GM12878 (cell line): ENCODE measurements at regions of chr18 and their contacts with region 1.

Region 1: DNA sequence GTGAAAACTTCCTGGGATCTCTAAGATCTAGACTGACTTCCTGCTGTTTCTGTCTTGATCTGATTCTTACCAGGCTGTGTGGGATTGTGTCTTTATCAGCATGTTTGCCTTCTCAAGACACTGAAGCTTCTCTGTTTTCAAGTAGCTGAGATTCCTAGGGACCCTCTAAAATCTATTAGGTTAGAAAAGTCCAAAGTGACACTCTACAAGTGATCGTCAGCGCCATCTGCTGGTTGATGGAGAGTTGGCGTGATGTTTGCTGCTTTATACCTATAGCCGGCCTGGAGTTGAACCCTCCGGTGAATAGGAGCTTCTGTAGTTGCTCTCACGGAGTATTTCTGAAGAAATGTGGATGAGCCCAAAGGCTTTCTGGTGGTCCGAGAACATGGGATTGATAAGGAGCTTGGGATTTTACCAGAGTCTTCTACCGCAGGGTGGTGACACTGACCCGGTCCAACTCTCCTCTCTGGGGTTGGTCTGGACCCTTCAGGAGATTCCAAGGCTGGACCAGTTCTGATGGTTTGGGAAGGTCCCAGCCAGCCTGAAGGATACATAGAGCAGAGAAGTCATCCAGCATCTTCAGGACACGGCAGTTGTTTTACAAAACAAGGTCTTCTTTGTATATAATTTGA is 96.0 kb upstream of the TTC39C start:
- DNase-seq: no peak
- ATAC-seq: peak; percentile 95
- H3K4me3 ChIP-seq: no peak overlapping the region
- H3K27ac ChIP-seq: no peak overlapping the region
- H3K4me1 ChIP-seq: no peaks in the 10 kb centered on the region
- H3K27me3 ChIP-seq: no peaks in the 10 kb centered on the region; a peak in 1 of 4 replicates
- CTCF ChIP-seq: peak; percentile 77 to 87 (median 85)
- EP300 ChIP-seq: no peak
- POLR2A ChIP-seq: no peak
- RAD21 ChIP-seq: peak; percentile 87

Region 2: DNA sequence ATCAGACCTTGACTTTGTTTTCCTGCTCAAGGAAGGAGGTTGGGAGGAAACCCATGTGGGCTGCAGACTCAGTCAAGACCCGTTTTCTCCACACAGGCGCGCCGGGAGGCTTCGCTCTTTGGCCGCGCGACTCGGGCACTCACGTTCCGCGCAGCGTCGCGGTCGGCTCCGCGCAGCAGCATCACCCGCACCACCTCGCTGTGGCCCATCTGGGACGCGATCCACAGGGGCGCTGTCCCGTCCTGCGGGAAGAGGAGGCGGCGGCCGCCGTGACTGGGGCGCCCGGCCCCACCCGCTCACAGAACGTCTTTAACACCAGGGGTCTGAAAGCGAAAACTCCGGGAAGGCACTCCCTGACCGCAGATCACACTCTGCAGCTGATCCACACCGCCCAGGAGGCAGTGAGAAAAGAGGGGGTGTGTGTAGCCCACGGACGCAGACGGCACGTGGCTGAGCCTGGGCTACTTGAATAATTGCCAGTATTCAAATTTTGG is 299.1 kb before region 1 on chr18:
- CTCF ChIA-PET with region 1: interaction called, 3 read pairs
- POLR2A ChIA-PET with region 1: no interaction called
- RAD21 ChIA-PET with region 1: interaction called, 5 read pairs
- SMC1A ChIA-PET with region 1: interaction called, 5 read pairs
- in situ Hi-C with region 1: no loop called
- intact Hi-C with region 1: loop called (anchors 5 kb)
- DNase-seq: no peak
- ATAC-seq: peak; percentile 42
- H3K4me3 ChIP-seq: peak overlapping the region; percentile 57; the same call in 1 of the 2 replicates
- H3K27ac ChIP-seq: no peak overlapping the region
- H3K4me1 ChIP-seq: peaks cover 17% of the 10 kb centered on the region
- H3K27me3 ChIP-seq: peaks cover 0 to 5% of the 10 kb centered on the region in 2 experiments; a peak in 2 of 4 replicates
- CTCF ChIP-seq: no peak
- EP300 ChIP-seq: no peak; a peak in 1 of 4 replicates
- POLR2A ChIP-seq: no peak
- RAD21 ChIP-seq: no peak

Region 3: DNA sequence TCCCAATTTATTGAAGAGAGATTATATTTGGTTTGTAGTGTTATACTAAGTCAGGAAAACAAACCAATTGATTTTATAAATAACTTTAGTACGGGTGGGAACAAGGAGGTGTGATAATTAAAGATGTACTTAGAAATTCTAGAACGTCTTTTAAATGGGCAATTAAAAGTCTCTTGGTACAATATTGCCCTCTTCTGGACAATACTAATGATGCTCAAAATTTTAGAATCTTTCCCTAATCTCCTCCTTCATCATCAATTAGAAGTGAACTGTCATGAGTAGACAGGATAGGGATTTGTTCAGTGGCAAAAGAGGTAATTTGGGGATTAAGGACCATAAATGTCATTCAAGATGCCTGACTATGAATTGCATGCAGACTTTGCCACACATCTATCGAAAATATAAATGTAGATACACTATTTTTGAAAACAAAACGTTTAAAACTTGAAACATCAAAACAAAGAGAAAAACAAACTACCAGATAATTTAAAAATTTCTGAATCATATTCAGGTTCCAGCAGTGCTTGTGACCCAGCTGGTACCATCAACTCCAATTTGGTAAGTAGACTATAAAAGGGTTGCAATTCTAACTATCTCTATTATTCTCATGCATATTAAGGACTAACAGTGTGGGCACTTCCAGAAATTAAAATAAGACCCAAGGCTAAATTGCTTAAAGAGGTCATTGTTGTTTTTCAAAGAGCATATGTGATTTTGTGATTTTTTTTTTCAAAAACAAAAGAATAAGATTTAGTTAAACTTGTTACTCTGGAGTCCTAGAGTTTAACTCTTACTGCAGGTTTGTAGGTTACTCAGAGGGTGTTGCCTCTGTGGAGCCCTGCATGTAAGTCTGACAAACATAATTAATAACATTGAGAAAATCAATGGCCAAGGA is 105.7 kb before region 1 on chr18:
- CTCF ChIA-PET with region 1: no interaction called
- POLR2A ChIA-PET with region 1: no interaction called
- RAD21 ChIA-PET with region 1: no interaction called
- SMC1A ChIA-PET with region 1: interaction called, 3 read pairs
- in situ Hi-C with region 1: no loop called
- intact Hi-C with region 1: loop called (anchors 1 kb)
- DNase-seq: no peak
- ATAC-seq: no peak
- H3K4me3 ChIP-seq: no peak overlapping the region
- H3K27ac ChIP-seq: no peak overlapping the region
- H3K4me1 ChIP-seq: peaks cover 15% of the 10 kb centered on the region
- H3K27me3 ChIP-seq: no peaks in the 10 kb centered on the region; a peak in 1 of 4 replicates
- CTCF ChIP-seq: peak; percentile 30 to 53 (median 38); a peak in 3 of 6 replicates
- EP300 ChIP-seq: no peak
- POLR2A ChIP-seq: no peak
- RAD21 ChIP-seq: peak; percentile 67

Region 4: GRCh38 chr18:23900994-23901393 is 17.5 kb before region 1 on chr18:
- CTCF ChIA-PET with region 1: interaction called, 11 read pairs
- POLR2A ChIA-PET with region 1: no interaction called
- RAD21 ChIA-PET with region 1: no interaction called
- SMC1A ChIA-PET with region 1: interaction called, 3 read pairs
- in situ Hi-C with region 1: no loop called
- intact Hi-C with region 1: no loop called
- DNase-seq: no peak
- ATAC-seq: peak; percentile 75
- H3K4me3 ChIP-seq: no peak overlapping the region
- H3K27ac ChIP-seq: no peak overlapping the region
- H3K4me1 ChIP-seq: no peaks in the 10 kb centered on the region
- H3K27me3 ChIP-seq: no peaks in the 10 kb centered on the region
- CTCF ChIP-seq: no peak
- EP300 ChIP-seq: no peak
- POLR2A ChIP-seq: no peak
- RAD21 ChIP-seq: peak; percentile 15; the same call in 1 of the 2 replicates

Region 5: GRCh38 chr18:23934252-23934651 is 15.7 kb after region 1 on chr18:
- CTCF ChIA-PET with region 1: interaction called, 20 read pairs
- POLR2A ChIA-PET with region 1: no interaction called
- RAD21 ChIA-PET with region 1: interaction called, 3 read pairs
- SMC1A ChIA-PET with region 1: interaction called, 11 read pairs
- in situ Hi-C with region 1: no loop called
- intact Hi-C with region 1: no loop called
- DNase-seq: no peak
- ATAC-seq: peak; percentile 55
- H3K4me3 ChIP-seq: no peak overlapping the region
- H3K27ac ChIP-seq: no peak overlapping the region
- H3K4me1 ChIP-seq: peaks cover 28% of the 10 kb centered on the region
- H3K27me3 ChIP-seq: no peaks in the 10 kb centered on the region
- CTCF ChIP-seq: no peak
- EP300 ChIP-seq: no peak
- POLR2A ChIP-seq: no peak
- RAD21 ChIP-seq: no peak

Region 6: GRCh38 chr18:24118750-24119577 is 200.4 kb after region 1 on chr18:
- CTCF ChIA-PET with region 1: interaction called, 16 read pairs
- POLR2A ChIA-PET with region 1: no interaction called
- RAD21 ChIA-PET with region 1: interaction called, 6 read pairs
- SMC1A ChIA-PET with region 1: interaction called, 6 read pairs
- in situ Hi-C with region 1: no loop called
- intact Hi-C with region 1: loop called (anchors 1 kb)
- DNase-seq: peak; percentile 56
- ATAC-seq: peak; percentile 93
- H3K4me3 ChIP-seq: no peak overlapping the region
- H3K27ac ChIP-seq: no peak overlapping the region
- H3K4me1 ChIP-seq: no peaks in the 10 kb centered on the region
- H3K27me3 ChIP-seq: no peaks in the 10 kb centered on the region
- CTCF ChIP-seq: peak; percentile 64 to 78 (median 77)
- EP300 ChIP-seq: no peak
- POLR2A ChIP-seq: no peak
- RAD21 ChIP-seq: peak; percentile 86